OCI-LY7 (cell line): ENCODE measurements at regions of chr2 and their contacts with region 1.

Region 1: DNA sequence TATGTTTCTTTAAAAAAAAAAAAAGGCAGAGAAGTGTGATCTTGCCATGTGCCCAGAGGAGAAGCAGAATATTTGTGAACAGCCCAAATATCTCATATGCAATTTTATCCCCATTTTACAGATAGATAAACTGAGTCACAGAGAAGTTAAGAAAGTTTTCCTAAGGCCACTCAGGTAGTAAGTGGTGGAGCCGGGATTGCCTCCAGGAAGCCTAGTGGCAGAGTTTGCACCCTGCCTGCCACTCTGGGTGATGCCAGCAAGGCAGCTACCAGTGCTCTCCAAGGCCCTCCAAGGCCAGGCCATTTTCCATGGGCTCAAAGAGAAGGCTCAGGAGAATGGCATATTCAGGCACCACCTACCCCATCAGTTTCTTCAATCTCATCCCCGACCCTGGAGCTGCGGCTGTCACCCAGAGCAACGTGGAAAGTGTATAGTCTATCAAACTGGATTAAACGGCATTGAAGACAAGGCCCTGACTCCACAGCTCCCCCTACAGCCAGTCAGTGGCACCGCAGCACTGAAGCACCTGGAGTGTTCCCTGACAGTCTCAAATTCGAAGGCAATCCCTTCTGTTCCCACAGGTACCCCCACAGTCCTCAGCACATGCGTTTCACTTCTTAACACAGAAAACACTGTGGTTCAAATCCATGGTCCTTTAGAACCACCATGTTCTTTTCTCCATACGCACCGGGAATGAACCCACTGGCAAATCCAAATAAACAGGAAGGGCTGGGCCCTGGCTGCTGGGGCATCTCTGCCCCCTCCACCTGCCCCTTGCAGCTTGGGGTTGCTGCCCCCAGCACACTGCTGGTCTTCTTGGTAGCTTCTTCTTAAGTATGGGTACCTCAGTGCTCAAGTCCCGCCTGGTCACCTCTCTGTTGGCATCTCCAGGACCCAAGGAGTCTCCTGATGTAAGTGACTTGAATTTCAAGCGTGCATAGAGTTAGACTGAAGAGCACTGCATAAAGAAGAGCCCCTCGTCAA is 175.3 kb downstream of the INHBB start:
- DNase-seq: peak; percentile 34
- H3K4me3 ChIP-seq: no peak overlapping the region
- H3K27ac ChIP-seq: no peak overlapping the region
- H3K4me1 ChIP-seq: no peaks in the 10 kb centered on the region
- CTCF ChIP-seq: peak; percentile 85

Region 2: GRCh38 chr2:120343433-120344105 is 177.7 kb before region 1 on chr2:
- CTCF ChIA-PET with region 1: no interaction called
- POLR2A ChIA-PET with region 1: no interaction called
- intact Hi-C with region 1: loop called (anchors 1 kb)
- DNase-seq: peak; percentile 5
- H3K4me3 ChIP-seq: no peak overlapping the region
- H3K27ac ChIP-seq: no peak overlapping the region
- H3K4me1 ChIP-seq: no peaks in the 10 kb centered on the region
- CTCF ChIP-seq: peak; percentile 62